ENCODE measurements at regions of chr7 and their contacts with region 1.

Region 1: DNA sequence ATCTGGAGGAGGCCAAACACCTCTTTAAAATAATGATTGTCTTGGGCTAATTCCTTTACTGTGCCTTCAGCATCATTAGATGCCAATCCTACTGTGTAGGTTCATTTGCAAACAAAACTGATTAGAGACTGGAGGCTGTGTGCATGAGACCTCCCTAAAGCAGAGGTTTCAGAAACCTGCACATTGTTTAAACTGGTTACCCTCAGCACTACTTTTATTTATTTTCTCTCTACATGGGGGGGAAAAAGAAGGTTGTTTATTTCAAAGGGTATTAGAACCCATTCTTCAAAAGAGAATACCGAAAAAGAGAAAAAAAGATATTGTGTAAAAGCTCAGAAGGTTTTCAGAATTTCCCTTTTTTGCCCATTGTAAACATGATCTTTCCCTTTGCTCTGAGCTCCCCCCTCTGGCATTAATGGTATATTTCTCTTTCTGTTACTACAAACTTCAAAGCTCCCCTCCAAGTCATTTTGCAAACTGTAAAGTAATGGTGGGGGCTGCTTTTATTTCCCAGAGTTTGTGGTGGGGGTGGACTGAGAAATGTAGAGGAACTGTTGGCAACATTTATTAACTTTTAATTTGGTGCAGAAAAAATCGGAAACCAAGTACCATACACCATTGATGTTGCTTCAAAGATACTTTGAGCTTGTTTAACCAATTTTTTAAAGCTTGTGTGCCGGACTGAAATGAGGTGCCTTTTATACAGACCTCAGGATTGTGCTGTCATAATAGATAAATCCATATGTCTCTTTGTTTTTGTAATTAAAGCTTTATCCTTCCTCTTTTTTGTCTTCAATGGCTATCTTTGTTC is 181.4 kb downstream of the EXOC4 start:
- DNase-seq: no peak
- H3K4me3 ChIP-seq: no peak overlapping the region
- CTCF ChIP-seq: peak; percentile 42

Region 2: GRCh38 chr7:132318352-132319318 is 1115.6 kb before region 1 on chr7:
- CTCF ChIA-PET with region 1: interaction called, 10 read pairs
- POLR2A ChIA-PET with region 1: no interaction called
- DNase-seq: peak; percentile 16
- H3K4me3 ChIP-seq: no peak overlapping the region
- CTCF ChIP-seq: peak; percentile 89

Region 3: GRCh38 chr7:132709971-132710567 is 724.2 kb before region 1 on chr7:
- CTCF ChIA-PET with region 1: interaction called, 27 read pairs
- POLR2A ChIA-PET with region 1: no interaction called
- DNase-seq: no peak
- H3K4me3 ChIP-seq: no peak overlapping the region
- CTCF ChIP-seq: peak; percentile 48

Region 4: GRCh38 chr7:133401225-133401624 is 33.0 kb before region 1 on chr7:
- CTCF ChIA-PET with region 1: interaction called, 13 read pairs
- POLR2A ChIA-PET with region 1: no interaction called
- DNase-seq: peak; percentile 10
- H3K4me3 ChIP-seq: no peak overlapping the region
- CTCF ChIP-seq: no peak

Region 5: GRCh38 chr7:133448012-133448411 is 13.8 kb after region 1 on chr7:
- CTCF ChIA-PET with region 1: interaction called, 24 read pairs
- POLR2A ChIA-PET with region 1: no interaction called
- DNase-seq: no peak
- H3K4me3 ChIP-seq: no peak overlapping the region
- CTCF ChIP-seq: no peak

Region 6: GRCh38 chr7:133461421-133461820 is 27.2 kb after region 1 on chr7:
- CTCF ChIA-PET with region 1: no interaction called
- POLR2A ChIA-PET with region 1: no interaction called
- DNase-seq: no peak
- H3K4me3 ChIP-seq: no peak overlapping the region
- CTCF ChIP-seq: no peak

Region 7: DNA sequence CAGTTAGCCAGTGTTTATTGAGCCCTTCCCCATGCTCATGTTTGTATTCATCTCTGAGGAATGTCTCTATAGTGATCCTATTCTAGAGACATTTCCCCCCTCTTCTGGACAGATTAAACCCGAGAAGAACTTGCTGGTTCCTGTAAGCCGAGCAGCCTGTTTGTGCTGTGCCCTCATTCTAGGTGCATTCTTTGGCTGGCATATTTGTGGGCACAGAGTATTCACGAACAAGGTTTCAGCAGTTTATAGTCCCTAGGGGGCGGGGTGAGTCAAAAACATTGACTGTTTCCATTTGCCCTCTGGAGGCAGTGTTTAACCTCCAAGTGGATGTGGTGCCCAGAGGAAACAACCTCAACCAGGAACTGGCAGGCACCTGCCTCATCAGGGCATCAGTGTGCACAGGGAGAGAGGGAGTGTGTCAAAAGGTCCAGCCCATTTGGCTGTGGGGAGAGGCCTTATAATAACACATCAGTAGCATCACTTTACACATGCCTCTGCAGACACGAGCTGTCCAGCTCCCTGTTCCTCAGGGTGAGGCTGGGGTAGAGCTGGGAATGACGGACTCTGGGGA is 419.5 kb after region 1 on chr7:
- CTCF ChIA-PET with region 1: interaction called, 16 read pairs
- POLR2A ChIA-PET with region 1: no interaction called
- DNase-seq: peak; percentile 82
- H3K4me3 ChIP-seq: no peak overlapping the region
- CTCF ChIP-seq: peak; percentile 37

Measured in AG04449 (cell line).